ENCODE measurements at regions of chr21 and their contacts with region 1.

Region 1: GRCh38 chr21:42248783-42249597 is 30.1 kb downstream of the ABCG1 start:
- DNase-seq: no peak
- H3K4me3 ChIP-seq: no peak overlapping the region
- H3K27ac ChIP-seq: no peak overlapping the region
- H3K4me1 ChIP-seq: peaks cover 4% of the 10 kb centered on the region
- H3K27me3 ChIP-seq: no peaks in the 10 kb centered on the region
- CTCF ChIP-seq: no peak
- EP300 ChIP-seq: no peak
- POLR2A ChIP-seq: no peak

Region 2: GRCh38 chr21:42171091-42172053 is 77.6 kb before region 1 on chr21:
- intact Hi-C with region 1: no loop called
- DNase-seq: peak in 1 of 5 donors; percentile 35
- H3K4me3 ChIP-seq: no peak overlapping the region
- H3K27ac ChIP-seq: no peak overlapping the region
- H3K4me1 ChIP-seq: no peaks in the 10 kb centered on the region
- H3K27me3 ChIP-seq: no peaks in the 10 kb centered on the region
- CTCF ChIP-seq: no peak
- EP300 ChIP-seq: no peak
- POLR2A ChIP-seq: no peak

Region 3: GRCh38 chr21:42187976-42188653 is 60.9 kb before region 1 on chr21:
- intact Hi-C with region 1: loop called in 1 of 4 experiments (anchors 10 kb)
- DNase-seq: no peak
- H3K4me3 ChIP-seq: no peak overlapping the region
- H3K27ac ChIP-seq: no peak overlapping the region
- H3K4me1 ChIP-seq: no peaks in the 10 kb centered on the region
- H3K27me3 ChIP-seq: no peaks in the 10 kb centered on the region
- CTCF ChIP-seq: no peak
- EP300 ChIP-seq: no peak
- POLR2A ChIP-seq: no peak

Region 4: DNA sequence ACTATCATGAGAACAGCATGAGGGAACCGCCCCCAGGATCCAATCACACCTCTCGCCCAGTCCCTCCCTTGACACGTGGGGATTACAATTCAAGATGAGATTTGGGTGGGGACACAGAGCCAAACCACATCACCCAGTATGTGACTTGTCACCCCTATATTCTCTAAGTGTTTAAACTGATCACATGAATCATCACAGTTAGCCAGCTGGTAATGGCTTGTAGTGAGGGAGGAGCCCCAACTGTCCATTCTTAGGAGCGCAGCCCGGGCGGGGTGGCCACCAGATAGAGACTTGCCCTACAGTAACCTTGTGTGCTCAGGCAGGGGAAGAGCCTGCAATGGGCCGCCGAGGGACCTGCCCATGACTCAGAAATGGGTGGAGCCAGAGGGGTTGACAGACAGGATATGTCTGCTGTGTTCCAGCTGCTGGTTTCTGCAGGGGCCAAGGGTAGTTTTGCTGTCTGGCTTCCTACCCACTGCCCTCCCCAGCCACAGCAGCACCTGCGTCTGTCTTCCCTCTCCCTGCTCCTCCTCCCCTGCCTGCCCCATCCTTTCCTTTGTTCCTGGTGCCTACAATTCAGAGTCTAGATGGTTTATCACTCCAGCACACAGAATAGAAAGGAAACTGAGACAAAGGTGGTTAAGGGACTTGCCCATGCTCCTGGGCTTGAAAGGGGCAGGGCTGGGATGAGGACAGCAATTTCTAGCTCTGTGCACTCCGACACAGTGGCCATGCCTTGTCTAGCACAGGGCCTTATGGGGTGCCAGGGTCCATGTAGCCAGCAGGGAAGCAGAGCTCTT is 20.9 kb before region 1 on chr21:
- intact Hi-C with region 1: no loop called
- DNase-seq: peak in 2 of 5 donors; percentile 42 to 53
- H3K4me3 ChIP-seq: no peak overlapping the region
- H3K27ac ChIP-seq: no peak overlapping the region
- H3K4me1 ChIP-seq: no peaks in the 10 kb centered on the region
- H3K27me3 ChIP-seq: no peaks in the 10 kb centered on the region
- CTCF ChIP-seq: no peak
- EP300 ChIP-seq: no peak
- POLR2A ChIP-seq: no peak

Region 5: GRCh38 chr21:42276526-42277154 is 27.6 kb after region 1 on chr21:
- intact Hi-C with region 1: loop called in 1 of 4 experiments (anchors 1 kb)
- DNase-seq: no peak
- H3K4me3 ChIP-seq: no peak overlapping the region
- H3K27ac ChIP-seq: no peak overlapping the region
- H3K4me1 ChIP-seq: no peaks in the 10 kb centered on the region
- H3K27me3 ChIP-seq: no peaks in the 10 kb centered on the region
- CTCF ChIP-seq: no peak
- EP300 ChIP-seq: no peak
- POLR2A ChIP-seq: no peak